ENCODE measurements at regions of chr17 and their contacts with region 1.

Region 1: DNA sequence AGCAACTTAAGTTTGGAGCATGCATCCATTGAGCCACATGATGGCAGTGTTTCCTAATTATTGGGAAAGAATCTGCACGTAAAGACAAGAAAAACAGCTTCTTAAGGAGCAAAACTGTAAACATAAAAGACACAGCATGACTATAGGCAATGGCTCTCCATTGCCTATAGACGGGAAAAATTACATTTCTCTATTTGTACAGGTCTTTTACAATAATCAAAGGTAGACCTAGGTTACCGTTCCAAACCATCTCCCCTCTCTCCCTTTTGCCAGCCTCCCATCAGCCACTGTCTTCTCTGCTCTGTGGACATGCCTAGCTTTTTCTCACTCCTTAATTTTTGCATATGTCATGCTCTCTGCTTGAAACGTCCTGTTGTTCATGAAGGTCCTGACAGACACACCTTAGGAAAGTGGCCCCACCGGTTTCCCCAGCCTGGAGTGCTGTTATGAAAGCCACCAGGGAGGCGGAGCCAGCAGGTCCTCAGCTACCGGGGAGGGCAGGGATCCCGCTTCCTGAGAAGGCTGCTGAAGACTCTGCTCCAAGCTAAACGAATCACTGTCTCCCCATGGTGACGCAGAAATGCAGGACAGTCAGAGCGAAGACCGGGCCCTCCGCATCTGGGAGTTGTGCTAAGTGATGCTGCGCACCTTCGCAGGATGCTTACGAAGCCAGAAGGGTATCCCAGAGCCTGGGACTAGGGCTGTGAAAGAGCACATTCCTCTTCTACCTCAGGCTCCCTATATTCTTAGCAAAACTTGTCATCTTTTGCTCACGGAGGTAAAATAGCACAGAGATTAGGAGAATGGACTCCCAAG is 2.2 kb upstream of the SLC16A11 start:
- DNase-seq: peak; percentile 68
- ATAC-seq: peak; percentile 31
- H3K4me3 Mint-ChIP-seq: peak overlapping the region; percentile 89
- H3K27ac Mint-ChIP-seq: peak overlapping the region; percentile 89
- H3K4me1 Mint-ChIP-seq: peaks cover 39% of the 10 kb centered on the region
- H3K27me3 Mint-ChIP-seq: peaks cover 10% of the 10 kb centered on the region

Region 2: DNA sequence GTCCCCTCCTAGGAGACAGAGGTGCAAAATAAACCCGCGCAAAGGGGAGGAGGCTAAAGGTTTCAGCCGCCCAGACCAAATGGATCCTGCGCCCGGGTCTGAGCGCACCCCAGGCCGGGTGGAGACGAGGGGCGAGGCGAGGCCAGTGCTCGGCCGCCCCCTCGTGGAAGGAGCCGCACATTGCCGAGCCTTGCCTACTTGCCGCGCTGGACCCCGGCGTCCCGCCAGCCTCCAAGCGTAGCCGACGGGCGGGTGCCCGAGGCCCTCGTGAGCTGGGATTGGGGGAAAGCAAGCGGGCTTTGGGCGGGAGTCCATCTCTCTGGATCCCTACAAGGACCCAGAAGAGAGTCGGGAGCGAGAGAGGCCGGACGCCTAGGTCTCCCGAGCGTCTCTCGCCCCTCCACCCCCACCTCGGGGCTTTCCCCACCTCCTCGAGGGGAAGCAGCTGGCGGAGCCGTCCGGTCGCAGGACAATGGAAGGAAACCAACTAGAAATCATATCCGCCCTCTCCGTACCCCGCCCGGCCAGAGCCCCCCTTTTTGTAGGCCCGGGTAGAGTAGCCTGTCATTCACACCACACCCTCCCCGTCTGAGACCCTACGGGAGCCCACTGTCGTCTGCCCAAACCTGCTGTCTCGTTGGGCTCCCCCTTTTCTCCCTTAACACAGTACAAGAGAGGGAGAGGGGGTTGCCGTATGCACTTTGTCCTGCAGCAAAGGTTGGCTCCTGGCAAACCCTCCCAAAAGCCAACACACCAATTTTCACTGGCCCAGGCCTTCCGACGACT is 23.9 kb before region 1 on chr17:
- CTCF ChIA-PET with region 1: interaction called, 29 read pairs
- DNase-seq: peak; percentile 89
- ATAC-seq: peak; percentile 77
- H3K4me3 Mint-ChIP-seq: peak overlapping the region; percentile 62
- H3K27ac Mint-ChIP-seq: peak overlapping the region; percentile 79
- H3K4me1 Mint-ChIP-seq: peaks cover 60% of the 10 kb centered on the region
- H3K27me3 Mint-ChIP-seq: no peaks in the 10 kb centered on the region

Region 3: GRCh38 chr17:7056386-7056785 is 10.3 kb after region 1 on chr17:
- CTCF ChIA-PET with region 1: interaction called, 14 read pairs
- DNase-seq: no peak
- ATAC-seq: no peak
- H3K4me3 Mint-ChIP-seq: no peak overlapping the region
- H3K27ac Mint-ChIP-seq: no peak overlapping the region
- H3K4me1 Mint-ChIP-seq: no peaks in the 10 kb centered on the region
- H3K27me3 Mint-ChIP-seq: peaks cover 4% of the 10 kb centered on the region

Region 4: DNA sequence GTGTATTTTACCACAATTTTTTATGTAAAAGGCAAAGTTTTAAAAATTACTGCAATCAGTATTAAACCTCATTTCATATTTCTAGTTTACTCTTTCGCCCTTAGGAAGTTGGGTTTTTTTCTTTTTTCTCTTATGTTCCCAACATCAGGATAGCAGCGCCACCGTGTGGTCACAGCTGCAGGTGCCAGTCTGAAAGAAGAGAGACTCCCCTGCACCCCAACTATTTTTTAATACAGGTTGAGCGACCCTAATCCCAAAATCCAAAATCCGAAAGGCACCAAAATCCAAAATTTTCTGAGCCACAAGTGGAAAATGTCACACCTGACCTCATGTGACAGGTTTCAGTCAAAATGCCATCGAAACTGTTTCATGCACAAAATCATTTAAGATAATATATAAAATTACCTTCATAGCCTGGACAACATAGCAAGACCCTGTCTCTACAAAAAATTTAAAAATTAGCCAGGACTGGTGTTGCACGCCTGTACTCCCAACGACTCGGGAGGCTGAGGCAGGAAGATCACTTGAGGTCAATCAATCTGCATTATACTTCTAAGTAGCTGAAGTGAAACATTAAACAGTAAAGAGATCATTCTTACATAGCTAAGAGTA is 90.3 kb after region 1 on chr17:
- CTCF ChIA-PET with region 1: interaction called, 253 read pairs
- DNase-seq: peak; percentile 82
- ATAC-seq: peak; percentile 40
- H3K4me3 Mint-ChIP-seq: no peak overlapping the region
- H3K27ac Mint-ChIP-seq: no peak overlapping the region
- H3K4me1 Mint-ChIP-seq: peaks cover 21% of the 10 kb centered on the region
- H3K27me3 Mint-ChIP-seq: peaks cover 13% of the 10 kb centered on the region

Region 5: GRCh38 chr17:7296189-7296902 is 250.2 kb after region 1 on chr17:
- CTCF ChIA-PET with region 1: interaction called, 12 read pairs
- DNase-seq: peak; percentile 71
- ATAC-seq: peak; percentile 37
- H3K4me3 Mint-ChIP-seq: no peak overlapping the region
- H3K27ac Mint-ChIP-seq: no peak overlapping the region
- H3K4me1 Mint-ChIP-seq: peaks cover 21% of the 10 kb centered on the region
- H3K27me3 Mint-ChIP-seq: peaks cover 46% of the 10 kb centered on the region